T-cell (primary cell): ENCODE measurements at regions of chr3 and their contacts with region 1.

Region 1: DNA sequence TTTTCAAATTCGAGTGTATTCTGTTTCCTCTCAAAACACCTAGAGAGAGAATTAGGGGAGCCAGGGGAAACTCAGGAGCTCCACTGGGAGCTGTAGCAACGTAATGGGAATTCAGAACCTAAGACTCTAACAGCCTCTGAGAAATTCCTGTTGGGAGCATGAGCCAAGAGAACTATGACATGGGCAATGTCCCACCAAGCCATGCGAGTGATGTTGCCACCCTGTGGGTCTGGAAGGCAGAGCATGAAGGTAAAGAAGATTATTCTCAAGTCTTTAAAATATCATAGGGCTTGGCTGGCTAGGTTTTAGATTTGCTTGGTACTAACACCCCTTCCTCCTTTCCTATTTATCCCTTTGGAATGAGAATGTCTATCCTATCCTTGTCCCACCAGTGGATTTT is 392.6 kb upstream of the ADAMTS9 start:
- DNase-seq: no peak
- ATAC-seq: no peak
- H3K4me3 ChIP-seq: no peak overlapping the region
- H3K4me3 Mint-ChIP-seq: no peak overlapping the region
- H3K27ac ChIP-seq: no peak overlapping the region
- H3K27ac Mint-ChIP-seq: no peak overlapping the region
- H3K4me1 ChIP-seq: no peaks in the 10 kb centered on the region
- H3K4me1 Mint-ChIP-seq: no peaks in the 10 kb centered on the region
- H3K27me3 ChIP-seq: no peaks in the 10 kb centered on the region
- H3K27me3 Mint-ChIP-seq: no peaks in the 10 kb centered on the region

Region 2: GRCh38 chr3:64295594-64295993 is 784.8 kb before region 1 on chr3:
- CTCF ChIA-PET with region 1: no interaction called
- POLR2A ChIA-PET with region 1: no interaction called
- DNase-seq: no peak
- ATAC-seq: no peak
- H3K4me3 ChIP-seq: no peak overlapping the region
- H3K4me3 Mint-ChIP-seq: no peak overlapping the region
- H3K27ac ChIP-seq: no peak overlapping the region
- H3K27ac Mint-ChIP-seq: no peak overlapping the region
- H3K4me1 ChIP-seq: no peaks in the 10 kb centered on the region
- H3K4me1 Mint-ChIP-seq: no peaks in the 10 kb centered on the region
- H3K27me3 ChIP-seq: no peaks in the 10 kb centered on the region
- H3K27me3 Mint-ChIP-seq: no peaks in the 10 kb centered on the region

Region 3: DNA sequence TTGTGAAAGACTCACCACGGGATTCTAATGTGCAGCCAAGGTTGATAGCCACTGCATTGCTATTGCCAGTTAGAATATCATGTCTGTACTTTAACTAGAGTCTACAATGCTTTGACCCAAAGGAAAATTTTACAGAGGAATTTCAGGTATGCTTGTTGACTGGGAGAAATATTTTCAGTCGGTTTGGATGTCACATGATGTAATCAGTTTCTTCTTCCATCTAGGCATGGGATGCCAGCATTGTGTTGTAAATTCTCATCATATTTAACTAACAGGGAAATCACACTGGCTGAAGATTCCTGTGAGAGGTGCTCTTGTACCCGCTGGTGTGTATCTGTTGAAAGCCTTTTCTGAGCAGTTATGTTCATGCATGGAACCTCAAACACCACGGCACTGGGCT is 116.3 kb after region 1 on chr3:
- CTCF ChIA-PET with region 1: no interaction called
- POLR2A ChIA-PET with region 1: no interaction called
- DNase-seq: no peak
- ATAC-seq: no peak
- H3K4me3 ChIP-seq: no peak overlapping the region
- H3K4me3 Mint-ChIP-seq: no peak overlapping the region
- H3K27ac ChIP-seq: no peak overlapping the region
- H3K27ac Mint-ChIP-seq: no peak overlapping the region
- H3K4me1 ChIP-seq: no peaks in the 10 kb centered on the region
- H3K4me1 Mint-ChIP-seq: no peaks in the 10 kb centered on the region
- H3K27me3 ChIP-seq: no peaks in the 10 kb centered on the region
- H3K27me3 Mint-ChIP-seq: no peaks in the 10 kb centered on the region

Region 4: DNA sequence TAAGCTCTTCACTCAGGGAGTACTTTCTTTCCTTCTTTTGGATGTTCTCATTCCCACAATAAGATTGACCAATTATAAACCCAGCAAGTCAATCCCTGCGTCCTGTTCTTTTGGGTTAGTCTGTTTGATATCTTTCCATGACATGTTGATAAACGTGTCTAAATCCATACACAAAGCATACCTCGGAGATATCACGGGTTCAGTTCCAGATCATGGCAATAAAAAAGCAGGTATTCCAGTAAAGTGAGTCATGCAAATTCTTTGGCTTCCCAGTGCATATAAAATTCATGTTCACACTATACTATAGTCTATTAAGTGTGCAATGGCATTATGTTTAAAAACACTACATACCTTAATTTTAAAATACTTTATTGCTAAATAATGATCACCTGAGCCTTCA is 290.6 kb after region 1 on chr3:
- CTCF ChIA-PET with region 1: interaction called in 1 of 2 experiments, 10 read pairs
- POLR2A ChIA-PET with region 1: no interaction called
- DNase-seq: no peak
- ATAC-seq: no peak
- H3K4me3 ChIP-seq: no peak overlapping the region
- H3K4me3 Mint-ChIP-seq: no peak overlapping the region
- H3K27ac ChIP-seq: no peak overlapping the region
- H3K27ac Mint-ChIP-seq: no peak overlapping the region
- H3K4me1 ChIP-seq: no peaks in the 10 kb centered on the region
- H3K4me1 Mint-ChIP-seq: no peaks in the 10 kb centered on the region
- H3K27me3 ChIP-seq: no peaks in the 10 kb centered on the region
- H3K27me3 Mint-ChIP-seq: no peaks in the 10 kb centered on the region

Region 5: GRCh38 chr3:65712140-65712539 is 631.7 kb after region 1 on chr3:
- CTCF ChIA-PET with region 1: no interaction called
- POLR2A ChIA-PET with region 1: no interaction called
- DNase-seq: no peak
- ATAC-seq: no peak
- H3K4me3 ChIP-seq: no peak overlapping the region
- H3K4me3 Mint-ChIP-seq: no peak overlapping the region
- H3K27ac ChIP-seq: no peak overlapping the region
- H3K27ac Mint-ChIP-seq: no peak overlapping the region
- H3K4me1 ChIP-seq: no peaks in the 10 kb centered on the region
- H3K4me1 Mint-ChIP-seq: no peaks in the 10 kb centered on the region
- H3K27me3 ChIP-seq: no peaks in the 10 kb centered on the region
- H3K27me3 Mint-ChIP-seq: peaks cover 0 to 4% of the 10 kb centered on the region in 2 donors